Endothelial cell of umbilical vein (primary cell): ENCODE measurements at regions of chr20 and their contacts with region 1.

Region 1: GRCh38 chr20:3679749-3680700 is 1.8 kb downstream of the ADAM33 start:
- DNase-seq: no peak
- H3K4me3 ChIP-seq: no peak overlapping the region
- H3K27ac ChIP-seq: no peak overlapping the region
- H3K4me1 ChIP-seq: no peaks in the 10 kb centered on the region
- H3K27me3 ChIP-seq: peaks cover 25 to 33% of the 10 kb centered on the region in 2 experiments
- CTCF ChIP-seq: no peak
- POLR2A ChIP-seq: no peak

Region 2: DNA sequence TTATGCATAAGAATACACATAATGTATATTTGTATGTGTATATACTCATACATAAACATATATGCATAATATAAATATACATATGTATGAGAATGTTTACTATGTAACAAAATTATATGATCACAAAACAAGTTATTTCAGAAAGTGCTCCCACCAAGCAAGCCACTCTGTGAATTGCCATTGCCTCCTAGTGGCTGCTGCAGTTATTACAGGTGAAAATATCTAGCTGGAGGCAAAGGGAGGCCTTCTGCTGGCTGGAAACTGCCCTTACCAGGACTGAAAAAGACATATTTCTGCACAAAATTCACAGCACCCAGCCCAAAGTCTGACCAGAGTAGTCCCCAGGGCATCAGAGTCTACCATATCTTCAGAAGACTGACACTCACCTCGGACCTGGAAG is 16.2 kb after region 1 on chr20:
- CTCF ChIA-PET with region 1: interaction called, 39 read pairs
- POLR2A ChIA-PET with region 1: no interaction called
- dilution Hi-C with region 1: no loop called
- intact Hi-C with region 1: no loop called
- DNase-seq: no peak
- H3K4me3 ChIP-seq: no peak overlapping the region
- H3K27ac ChIP-seq: no peak overlapping the region
- H3K4me1 ChIP-seq: no peaks in the 10 kb centered on the region
- H3K27me3 ChIP-seq: no peaks in the 10 kb centered on the region
- CTCF ChIP-seq: peak in 1 of 2 donors; percentile 34
- POLR2A ChIP-seq: no peak

Region 3: DNA sequence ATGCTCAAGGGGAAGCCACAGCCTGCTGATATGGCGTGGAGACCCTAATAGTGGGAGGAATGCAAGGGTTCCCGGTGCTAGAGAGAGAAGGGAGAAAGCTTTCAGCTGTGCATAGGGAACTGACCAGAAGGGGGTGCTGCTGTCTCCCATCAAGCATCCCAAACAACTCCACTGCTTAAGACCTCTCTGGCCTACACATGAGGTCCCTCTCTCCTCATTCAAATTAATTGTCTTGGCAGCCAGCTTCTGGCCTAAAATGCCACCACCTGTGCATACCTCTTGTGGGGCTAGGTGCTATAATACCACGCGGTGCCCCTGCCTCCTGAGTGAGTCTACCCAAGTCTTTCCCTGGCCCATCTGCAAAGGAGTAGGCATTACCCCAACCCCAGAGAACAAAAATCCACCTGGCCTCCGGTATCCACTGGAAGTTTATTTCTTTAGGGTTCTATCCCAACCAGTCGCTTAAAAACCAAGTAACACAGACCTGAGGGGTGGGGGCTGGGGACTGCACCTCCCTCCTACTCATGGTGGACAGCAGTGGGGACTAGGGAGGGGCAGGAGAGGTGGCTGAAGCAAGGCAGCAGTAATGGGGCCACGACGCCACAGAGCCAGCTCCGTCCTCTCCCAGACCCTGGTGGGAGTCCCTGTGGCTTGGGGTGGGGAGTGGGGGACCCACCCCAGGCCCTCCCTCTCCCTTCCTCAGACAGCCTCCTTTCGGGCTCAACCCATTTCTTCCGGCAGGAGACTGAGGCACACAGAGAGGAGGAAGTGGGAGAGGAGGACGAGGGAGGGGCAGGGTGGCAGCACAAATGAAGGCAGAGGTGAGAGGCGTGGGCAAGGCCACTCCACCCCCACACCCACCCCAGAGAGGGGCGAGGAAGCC is 73.3 kb after region 1 on chr20:
- CTCF ChIA-PET with region 1: interaction called, 15 read pairs
- POLR2A ChIA-PET with region 1: no interaction called
- dilution Hi-C with region 1: no loop called
- intact Hi-C with region 1: loop called (anchors 5 kb)
- DNase-seq: peak; percentile 66
- H3K4me3 ChIP-seq: no peak overlapping the region
- H3K27ac ChIP-seq: no peak overlapping the region
- H3K4me1 ChIP-seq: no peaks in the 10 kb centered on the region
- H3K27me3 ChIP-seq: no peaks in the 10 kb centered on the region
- CTCF ChIP-seq: peak; percentile 79 to 89
- POLR2A ChIP-seq: peak; percentile 55

Region 4: GRCh38 chr20:3781153-3781910 is 101.3 kb after region 1 on chr20 and contains the start of gene SPEF1:
- CTCF ChIA-PET with region 1: interaction called, 25 read pairs
- POLR2A ChIA-PET with region 1: no interaction called
- dilution Hi-C with region 1: no loop called
- intact Hi-C with region 1: loop called (anchors 1 kb)
- DNase-seq: peak; percentile 90
- H3K4me3 ChIP-seq: peak within 1 kb of the TSS in 2 of 3 experiments; percentile 3 to 17
- H3K27ac ChIP-seq: no peak within 1 kb of the TSS
- H3K4me1 ChIP-seq: peaks cover 28% of the 10 kb centered on the region
- H3K27me3 ChIP-seq: peaks cover 8 to 19% of the 10 kb centered on the region in 2 experiments
- CTCF ChIP-seq: peak; percentile 42 to 56
- POLR2A ChIP-seq: peak; percentile 68
- total RNA-seq, gene SPEF1: 0.32 and 0.44 TPM in 2 replicates

Region 5: GRCh38 chr20:4082406-4083097 is 402.5 kb after region 1 on chr20:
- CTCF ChIA-PET with region 1: interaction called, 16 read pairs
- POLR2A ChIA-PET with region 1: no interaction called
- dilution Hi-C with region 1: no loop called
- intact Hi-C with region 1: loop called (anchors 1 kb)
- DNase-seq: no peak
- H3K4me3 ChIP-seq: no peak overlapping the region
- H3K27ac ChIP-seq: no peak overlapping the region
- H3K4me1 ChIP-seq: peaks cover 7% of the 10 kb centered on the region
- H3K27me3 ChIP-seq: no peaks in the 10 kb centered on the region
- CTCF ChIP-seq: no peak
- POLR2A ChIP-seq: no peak